CD8-positive, alpha-beta T cell (primary cell): ENCODE measurements at regions of chr6 and their contacts with region 1.

Region 1: GRCh38 chr6:25027221-25027916 is 91.6 kb upstream of the RIPOR2 start:
- DNase-seq: peak; percentile 43 to 89 (median 72)
- ATAC-seq: peak; percentile 94
- H3K4me3 ChIP-seq: peak overlapping the region; percentile 37 to 43
- H3K4me3 Mint-ChIP-seq: peak overlapping the region; percentile 75
- H3K27ac ChIP-seq: peak overlapping the region in 1 of 2 experiments; percentile 63
- H3K27ac Mint-ChIP-seq: peak overlapping the region; percentile 90
- H3K4me1 ChIP-seq: peaks cover 31% of the 10 kb centered on the region
- H3K4me1 Mint-ChIP-seq: peaks cover 43% of the 10 kb centered on the region
- H3K27me3 ChIP-seq: no peaks in the 10 kb centered on the region
- H3K27me3 Mint-ChIP-seq: no peaks in the 10 kb centered on the region
- CTCF ChIP-seq: peak; percentile 60

Region 2: DNA sequence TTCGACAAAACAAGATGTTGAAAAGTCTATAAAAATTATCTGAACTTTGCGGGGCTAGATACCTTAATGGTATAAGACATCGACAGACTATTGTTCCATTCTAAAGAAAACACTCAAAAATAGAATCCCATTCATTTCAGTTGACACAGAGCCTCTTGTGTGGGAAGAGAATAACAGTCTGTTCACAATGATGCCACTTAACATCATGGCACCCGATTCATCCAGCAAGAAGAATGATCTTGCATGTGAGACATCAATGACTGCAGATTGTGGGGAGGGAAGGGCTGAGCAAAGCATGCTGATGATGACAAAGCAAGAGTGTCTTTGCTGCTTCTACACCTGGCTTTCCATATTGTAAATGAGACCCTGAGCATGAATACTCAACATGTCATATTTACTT is 178.9 kb before region 1 on chr6:
- CTCF ChIA-PET with region 1: interaction called, 11 read pairs
- POLR2A ChIA-PET with region 1: interaction called, 3 read pairs
- intact Hi-C with region 1: no loop called
- DNase-seq: no peak
- ATAC-seq: no peak
- H3K4me3 ChIP-seq: no peak overlapping the region
- H3K4me3 Mint-ChIP-seq: no peak overlapping the region
- H3K27ac ChIP-seq: no peak overlapping the region
- H3K27ac Mint-ChIP-seq: peak overlapping the region; percentile 87
- H3K4me1 ChIP-seq: peaks cover 12% of the 10 kb centered on the region
- H3K4me1 Mint-ChIP-seq: peaks cover 49% of the 10 kb centered on the region
- H3K27me3 ChIP-seq: no peaks in the 10 kb centered on the region
- H3K27me3 Mint-ChIP-seq: no peaks in the 10 kb centered on the region
- CTCF ChIP-seq: no peak

Region 3: DNA sequence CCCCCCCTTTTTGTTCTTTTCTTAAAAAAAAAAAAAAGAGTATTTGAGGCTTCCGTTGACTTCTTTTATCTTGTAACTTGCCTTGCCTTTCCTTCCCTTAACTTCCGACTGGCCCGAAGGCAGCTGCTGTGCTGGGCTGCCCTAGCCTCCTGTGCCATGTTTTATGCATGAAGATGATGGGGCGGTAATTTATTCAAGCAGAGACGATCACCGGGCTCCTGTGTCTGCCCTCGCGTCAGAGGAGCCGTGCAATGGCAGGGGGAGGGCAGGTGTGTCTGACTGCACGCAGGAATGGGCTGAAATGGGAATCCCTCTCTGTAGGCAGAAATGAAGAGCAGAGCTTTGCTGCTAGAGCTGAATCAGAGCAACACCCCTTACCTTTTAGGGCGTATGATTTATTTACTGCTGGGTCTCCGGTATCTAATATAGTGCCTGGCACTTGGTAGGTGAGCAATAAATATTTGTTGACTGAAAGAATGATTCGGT is 14.7 kb after region 1 on chr6:
- CTCF ChIA-PET with region 1: interaction called, 73 read pairs
- POLR2A ChIA-PET with region 1: interaction called, 17 read pairs
- intact Hi-C with region 1: loop called in 1 of 2 experiments (anchors 1 kb)
- DNase-seq: peak in 8 of 9 experiments; percentile 20 to 80 (median 59)
- ATAC-seq: peak; percentile 63
- H3K4me3 ChIP-seq: peak overlapping the region; percentile 52 to 82
- H3K4me3 Mint-ChIP-seq: peak overlapping the region; percentile 94
- H3K27ac ChIP-seq: peak overlapping the region; percentile 58 to 90
- H3K27ac Mint-ChIP-seq: peak overlapping the region; percentile 92
- H3K4me1 ChIP-seq: peaks cover 48% of the 10 kb centered on the region
- H3K4me1 Mint-ChIP-seq: peaks cover 60% of the 10 kb centered on the region
- H3K27me3 ChIP-seq: no peaks in the 10 kb centered on the region
- H3K27me3 Mint-ChIP-seq: no peaks in the 10 kb centered on the region
- CTCF ChIP-seq: no peak

Region 4: DNA sequence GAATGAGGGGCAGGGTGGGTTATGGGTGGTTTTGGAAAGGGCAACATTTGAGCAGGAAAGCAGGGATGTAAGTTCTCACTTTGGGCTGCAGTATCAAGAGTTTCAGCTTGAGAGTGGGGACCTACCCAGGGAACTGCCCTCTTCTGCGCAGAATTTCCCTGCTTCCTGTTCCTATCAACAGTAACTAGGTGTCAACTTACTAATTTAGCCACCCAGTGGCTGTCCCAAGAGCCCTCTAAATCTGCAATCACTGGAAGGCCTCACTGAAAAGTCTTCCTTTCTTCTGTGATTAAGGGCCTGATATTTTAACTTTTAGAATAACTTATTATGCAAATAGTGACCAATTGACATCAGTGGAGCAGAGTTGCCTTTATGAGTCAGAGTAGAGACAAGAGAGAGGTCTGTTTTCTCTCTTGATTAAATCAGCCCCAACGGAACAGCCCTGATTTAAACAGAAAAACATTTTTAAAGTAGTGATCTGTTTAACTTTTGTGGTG is 26.6 kb after region 1 on chr6:
- CTCF ChIA-PET with region 1: interaction called, 32 read pairs
- POLR2A ChIA-PET with region 1: interaction called, 5 read pairs
- intact Hi-C with region 1: loop called in 1 of 2 experiments (anchors 2 kb)
- DNase-seq: peak in 2 of 9 experiments; percentile 62 to 76
- ATAC-seq: no peak
- H3K4me3 ChIP-seq: no peak overlapping the region
- H3K4me3 Mint-ChIP-seq: no peak overlapping the region
- H3K27ac ChIP-seq: no peak overlapping the region
- H3K27ac Mint-ChIP-seq: peak overlapping the region; percentile 11
- H3K4me1 ChIP-seq: peaks cover 41% of the 10 kb centered on the region
- H3K4me1 Mint-ChIP-seq: peaks cover 72% of the 10 kb centered on the region
- H3K27me3 ChIP-seq: no peaks in the 10 kb centered on the region
- H3K27me3 Mint-ChIP-seq: no peaks in the 10 kb centered on the region
- CTCF ChIP-seq: no peak

Region 5: GRCh38 chr6:25061289-25061936 is 34.0 kb after region 1 on chr6:
- CTCF ChIA-PET with region 1: interaction called, 32 read pairs
- POLR2A ChIA-PET with region 1: interaction called, 6 read pairs
- intact Hi-C with region 1: no loop called
- DNase-seq: no peak
- ATAC-seq: no peak
- H3K4me3 ChIP-seq: no peak overlapping the region
- H3K4me3 Mint-ChIP-seq: no peak overlapping the region
- H3K27ac ChIP-seq: no peak overlapping the region
- H3K27ac Mint-ChIP-seq: no peak overlapping the region
- H3K4me1 ChIP-seq: peaks cover 10% of the 10 kb centered on the region
- H3K4me1 Mint-ChIP-seq: peaks cover 19% of the 10 kb centered on the region
- H3K27me3 ChIP-seq: no peaks in the 10 kb centered on the region
- H3K27me3 Mint-ChIP-seq: no peaks in the 10 kb centered on the region
- CTCF ChIP-seq: no peak

Region 6: DNA sequence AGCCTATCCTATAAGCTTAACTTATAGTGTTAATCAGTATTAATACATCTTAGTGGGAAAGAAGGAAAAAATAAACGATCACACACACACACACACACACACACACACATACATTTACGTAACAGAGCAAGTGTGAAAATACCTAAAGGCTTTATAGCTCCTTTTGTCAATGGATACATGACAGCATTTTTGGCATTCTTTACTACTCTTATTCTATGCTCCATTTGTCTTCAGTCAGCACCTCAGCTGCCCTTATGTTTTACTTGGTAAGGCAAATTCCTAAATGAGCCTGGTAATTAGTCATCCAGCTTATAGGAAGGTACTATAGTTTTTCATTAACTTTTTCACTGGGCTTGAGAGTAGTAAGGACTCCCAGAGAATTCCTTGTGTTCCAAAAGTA is 871.8 kb after region 1 on chr6:
- CTCF ChIA-PET with region 1: no interaction called
- POLR2A ChIA-PET with region 1: no interaction called
- intact Hi-C with region 1: no loop called
- DNase-seq: no peak
- ATAC-seq: no peak
- H3K4me3 ChIP-seq: no peak overlapping the region
- H3K4me3 Mint-ChIP-seq: no peak overlapping the region
- H3K27ac ChIP-seq: no peak overlapping the region
- H3K27ac Mint-ChIP-seq: no peak overlapping the region
- H3K4me1 ChIP-seq: no peaks in the 10 kb centered on the region
- H3K4me1 Mint-ChIP-seq: no peaks in the 10 kb centered on the region
- H3K27me3 ChIP-seq: no peaks in the 10 kb centered on the region
- H3K27me3 Mint-ChIP-seq: peaks cover 4% of the 10 kb centered on the region
- CTCF ChIP-seq: no peak